ENCODE measurements at regions of chr6 and their contacts with region 1.

Region 1: GRCh38 chr6:157879873-157880254 is 56.8 kb downstream of the SNX9 start:
- DNase-seq: peak in 2 of 4 donors; percentile 58 to 63
- ATAC-seq: peak; percentile 85
- H3K4me3 ChIP-seq: no peak overlapping the region
- H3K27ac ChIP-seq: no peak overlapping the region
- H3K4me1 ChIP-seq: peaks cover 0 to 4% of the 10 kb centered on the region in 2 donors
- H3K27me3 ChIP-seq: peaks cover 8 to 17% of the 10 kb centered on the region in 2 donors
- CTCF ChIP-seq: no peak

Region 2: DNA sequence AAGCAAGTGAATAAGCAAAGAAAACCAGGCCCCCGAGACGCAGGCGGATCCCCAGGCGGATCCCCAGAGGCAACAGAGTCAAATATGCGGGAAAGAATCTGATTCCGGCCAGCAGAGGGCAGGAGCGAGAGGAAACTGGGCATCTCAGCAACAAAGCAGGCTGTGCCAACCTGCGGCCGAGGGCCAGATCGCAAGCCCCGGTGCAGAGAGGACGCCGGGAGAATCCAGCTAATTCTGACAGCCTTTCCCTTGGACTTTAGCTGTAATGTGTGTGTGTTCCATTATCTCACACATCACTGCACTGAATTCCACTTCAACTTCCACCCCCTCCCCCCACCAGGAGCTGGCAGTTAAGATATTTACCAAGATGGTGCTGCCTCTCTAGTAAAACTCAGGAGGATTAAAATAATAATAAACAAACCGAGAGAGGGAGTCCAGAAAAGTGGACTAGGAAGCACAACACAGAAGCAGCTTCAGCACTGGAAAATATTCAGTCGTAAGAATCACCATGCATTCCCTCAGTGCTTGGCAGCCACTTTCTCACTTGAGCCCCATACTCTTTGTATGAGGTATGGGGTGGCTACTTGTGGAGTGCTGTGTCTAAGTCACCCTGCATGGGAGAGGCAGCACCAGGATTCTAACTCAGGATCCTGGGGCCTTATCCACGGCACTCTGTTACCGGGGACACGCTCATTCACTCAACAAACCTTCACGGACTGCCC is 123.0 kb before region 1 on chr6:
- intact Hi-C with region 1: loop called in 1 of 2 experiments (anchors 5 kb)
- DNase-seq: peak; percentile 80 to 90 (median 84)
- ATAC-seq: peak; percentile 95
- H3K4me3 ChIP-seq: no peak overlapping the region
- H3K27ac ChIP-seq: no peak overlapping the region
- H3K4me1 ChIP-seq: peaks cover 7 to 41% of the 10 kb centered on the region in 2 donors
- H3K27me3 ChIP-seq: peaks cover 0 to 14% of the 10 kb centered on the region in 2 donors
- CTCF ChIP-seq: peak; percentile 73 to 74